ENCODE measurements at regions of chr2 and their contacts with region 1.

Region 1: DNA sequence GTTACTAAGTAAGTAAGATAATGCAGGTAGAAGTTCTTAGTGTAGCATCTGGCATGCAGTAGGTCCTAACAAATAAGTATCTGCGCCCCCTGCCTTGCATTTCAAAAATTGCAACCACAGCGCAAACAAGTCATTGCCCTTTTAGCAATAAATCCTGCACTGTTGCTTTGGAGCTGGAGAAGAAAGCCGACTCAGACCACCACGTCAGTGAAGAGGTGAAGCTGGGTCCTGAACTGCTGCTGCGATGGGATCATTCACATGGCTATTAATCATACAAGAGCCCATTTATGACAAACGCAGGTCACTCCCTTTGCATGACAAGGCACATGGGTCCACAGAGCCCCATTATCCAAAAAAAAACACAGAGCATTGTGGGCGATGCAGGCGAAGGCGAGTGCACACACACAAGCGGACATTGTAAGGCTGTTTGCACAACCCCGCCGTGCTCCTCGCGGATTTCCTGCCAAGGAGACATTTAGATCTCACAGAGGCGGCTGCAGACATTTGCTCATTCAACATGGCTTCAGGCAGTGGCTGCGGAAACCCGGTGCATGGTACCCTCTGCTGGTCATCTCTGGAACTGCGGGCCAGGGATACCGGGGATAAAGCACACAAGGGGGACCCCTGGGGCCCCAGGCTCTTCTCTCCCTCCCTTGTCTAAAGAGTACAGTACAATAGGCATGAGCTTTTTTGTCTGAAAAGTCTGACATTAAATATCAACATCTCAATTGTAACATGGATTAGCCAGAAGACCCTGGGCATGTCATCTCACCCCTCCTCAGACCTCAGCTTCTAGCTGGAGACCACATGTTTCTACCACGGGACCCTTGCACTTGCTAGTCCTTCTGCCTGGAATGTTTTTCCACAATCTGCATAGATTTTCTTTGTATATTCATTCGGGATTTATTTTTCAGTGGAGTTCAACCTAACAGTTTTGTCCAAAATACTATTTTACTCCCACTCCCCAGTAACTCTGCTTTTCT is 56.7 kb downstream of the CYRIA start:
- DNase-seq: peak; percentile 86
- H3K4me3 ChIP-seq: peak overlapping the region in 2 of 3 experiments; percentile 21 to 57
- H3K27ac ChIP-seq: peak overlapping the region; percentile 21
- H3K4me1 ChIP-seq: peaks cover 8% of the 10 kb centered on the region
- H3K27me3 ChIP-seq: no peaks in the 10 kb centered on the region
- CTCF ChIP-seq: peak; percentile 80 to 98
- POLR2A ChIP-seq: no peak

Region 2: GRCh38 chr2:15649556-15650255 is 959.2 kb before region 1 on chr2:
- CTCF ChIA-PET with region 1: no interaction called
- POLR2A ChIA-PET with region 1: no interaction called
- dilution Hi-C with region 1: no loop called
- intact Hi-C with region 1: no loop called
- DNase-seq: no peak
- H3K4me3 ChIP-seq: no peak overlapping the region
- H3K27ac ChIP-seq: no peak overlapping the region
- H3K4me1 ChIP-seq: peaks cover 10% of the 10 kb centered on the region
- H3K27me3 ChIP-seq: no peaks in the 10 kb centered on the region
- CTCF ChIP-seq: no peak
- POLR2A ChIP-seq: no peak

Region 3: DNA sequence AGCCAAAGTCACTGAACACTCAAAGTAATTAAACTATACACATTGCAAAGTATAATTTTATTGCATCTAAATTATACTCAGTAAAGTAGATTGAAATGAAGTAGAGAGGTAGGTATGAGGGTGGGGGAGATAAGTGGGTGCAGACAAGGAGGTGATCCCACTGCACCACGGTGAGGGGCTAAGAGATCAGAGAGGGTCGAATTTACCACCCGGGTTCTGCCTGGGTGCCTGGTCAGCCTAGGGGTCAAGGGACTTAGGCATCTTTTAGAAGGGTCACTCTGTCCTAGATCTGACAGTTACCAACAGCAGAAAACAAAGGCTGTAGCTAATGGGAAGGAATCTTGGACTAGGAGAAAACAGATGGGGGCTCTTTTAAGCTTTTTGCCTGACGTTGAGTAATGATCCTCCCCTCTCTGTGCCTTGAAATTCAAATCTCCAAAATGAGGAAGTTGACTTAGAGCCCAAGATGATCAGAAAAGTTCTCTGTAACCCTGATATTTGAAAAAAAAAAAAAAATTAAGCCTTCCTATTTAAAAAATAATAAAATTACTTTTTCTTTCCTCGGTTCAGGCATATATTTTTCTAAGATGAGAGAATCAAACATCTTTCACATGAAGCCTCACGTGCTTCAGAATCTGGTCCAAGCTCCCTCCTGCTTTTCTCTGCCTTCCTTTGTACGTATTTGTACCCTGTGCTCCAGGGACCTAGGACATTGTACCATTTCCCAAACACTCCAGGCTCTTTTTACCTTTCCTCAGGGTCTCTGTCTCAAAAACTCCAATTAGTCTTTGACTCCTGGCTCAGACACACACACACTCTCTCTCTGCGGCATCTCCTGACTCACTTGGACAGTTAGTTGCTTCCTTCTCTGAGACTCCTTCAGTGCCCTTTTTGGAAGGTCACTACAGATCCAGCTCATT is 297.2 kb before region 1 on chr2:
- CTCF ChIA-PET with region 1: no interaction called
- POLR2A ChIA-PET with region 1: no interaction called
- dilution Hi-C with region 1: no loop called
- intact Hi-C with region 1: no loop called
- DNase-seq: no peak
- H3K4me3 ChIP-seq: no peak overlapping the region
- H3K27ac ChIP-seq: no peak overlapping the region
- H3K4me1 ChIP-seq: no peaks in the 10 kb centered on the region
- H3K27me3 ChIP-seq: no peaks in the 10 kb centered on the region
- CTCF ChIP-seq: no peak
- POLR2A ChIP-seq: no peak

Region 4: GRCh38 chr2:16525265-16525887 is 83.6 kb before region 1 on chr2:
- CTCF ChIA-PET with region 1: interaction called, 72 read pairs
- POLR2A ChIA-PET with region 1: no interaction called
- dilution Hi-C with region 1: no loop called
- intact Hi-C with region 1: loop called (anchors 1 kb)
- DNase-seq: peak; percentile 25
- H3K4me3 ChIP-seq: no peak overlapping the region
- H3K27ac ChIP-seq: no peak overlapping the region
- H3K4me1 ChIP-seq: no peaks in the 10 kb centered on the region
- H3K27me3 ChIP-seq: peaks cover 2 to 9% of the 10 kb centered on the region in 2 experiments
- CTCF ChIP-seq: peak; percentile 61 to 62
- POLR2A ChIP-seq: no peak

Region 5: DNA sequence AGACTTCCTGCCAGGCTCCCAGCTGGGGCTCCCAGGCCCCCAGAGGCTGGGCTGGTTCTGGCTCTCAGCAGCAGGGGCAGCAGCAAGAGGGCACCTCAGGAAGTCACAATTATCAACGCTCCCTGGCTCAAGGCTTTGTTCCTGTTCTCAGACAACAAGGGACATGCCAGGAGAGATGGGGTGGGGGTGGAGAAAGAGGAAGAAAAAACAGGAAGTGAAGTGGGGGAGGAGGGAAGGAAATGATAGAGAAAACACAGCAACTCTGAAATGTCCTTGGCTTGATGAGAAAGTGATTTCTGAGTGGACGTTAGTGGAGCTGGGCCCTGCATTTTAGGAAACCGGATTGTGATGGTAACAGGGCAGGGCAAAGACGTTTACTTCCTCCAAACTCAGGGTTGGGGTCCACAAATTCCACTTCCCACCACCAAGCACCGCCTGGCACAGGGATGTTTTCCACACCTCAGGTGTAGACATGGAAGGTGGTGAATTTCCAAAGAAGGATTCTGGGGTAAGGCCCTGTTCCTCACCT is 16.3 kb after region 1 on chr2:
- CTCF ChIA-PET with region 1: interaction called, 18 read pairs
- POLR2A ChIA-PET with region 1: no interaction called
- dilution Hi-C with region 1: no loop called
- intact Hi-C with region 1: no loop called
- DNase-seq: peak; percentile 67
- H3K4me3 ChIP-seq: no peak overlapping the region
- H3K27ac ChIP-seq: peak overlapping the region; percentile 54
- H3K4me1 ChIP-seq: peaks cover 31% of the 10 kb centered on the region
- H3K27me3 ChIP-seq: no peaks in the 10 kb centered on the region
- CTCF ChIP-seq: no peak
- POLR2A ChIP-seq: peak; percentile 17

Region 6: GRCh38 chr2:16756831-16757644 is 148.1 kb after region 1 on chr2:
- CTCF ChIA-PET with region 1: interaction called, 149 read pairs
- POLR2A ChIA-PET with region 1: no interaction called
- dilution Hi-C with region 1: no loop called
- intact Hi-C with region 1: loop called (anchors 1 kb)
- DNase-seq: peak; percentile 67
- H3K4me3 ChIP-seq: no peak overlapping the region
- H3K27ac ChIP-seq: no peak overlapping the region
- H3K4me1 ChIP-seq: no peaks in the 10 kb centered on the region
- H3K27me3 ChIP-seq: peaks cover 0 to 2% of the 10 kb centered on the region in 2 experiments
- CTCF ChIP-seq: peak; percentile 78 to 84
- POLR2A ChIP-seq: no peak

Measured in endothelial cell of umbilical vein (primary cell).